H1 (cell line): ENCODE measurements at regions of chr16 and their contacts with region 1.

Region 1: GRCh38 chr16:53356478-53357200 is 77.6 kb upstream of the RBL2 start:
- DNase-seq: no peak
- H3K4me3 ChIP-seq: no peak overlapping the region
- H3K27ac ChIP-seq: no peak overlapping the region
- H3K4me1 ChIP-seq: 0 out of 7 replicates have a peak, but pooled peaks cover 0 to 2% (median 0%) of the 10 kb centered on the region in 4 experiments
- H3K27me3 ChIP-seq: no peaks in the 10 kb centered on the region
- CTCF ChIP-seq: peak; percentile 31 to 53 (median 32); a peak in 3 of 4 replicates
- EP300 ChIP-seq: no peak
- POLR2A ChIP-seq: no peak
- RAD21 ChIP-seq: peak; percentile 57 to 59

Region 2: DNA sequence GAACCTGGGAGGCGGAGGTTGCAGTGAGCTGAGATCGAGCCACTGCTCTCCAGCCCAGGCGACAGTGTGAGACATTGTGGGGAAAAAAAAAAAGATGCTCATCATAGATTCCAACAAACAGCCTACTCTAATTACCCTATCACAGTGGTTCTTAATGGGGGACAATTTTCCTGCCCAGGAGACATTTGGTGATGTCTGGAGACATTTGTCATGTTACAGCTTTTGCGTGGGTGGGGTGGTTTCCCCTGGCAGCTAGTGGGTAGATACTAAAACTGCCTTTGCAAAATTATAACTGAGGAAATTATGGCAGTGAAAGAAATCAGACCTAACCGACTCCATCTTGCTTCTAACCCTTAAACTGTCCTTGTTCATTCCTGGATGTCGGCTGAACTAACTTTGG is 14.8 kb before region 1 on chr16:
- CTCF ChIA-PET with region 1: interaction called, 14 read pairs
- POLR2A ChIA-PET with region 1: no interaction called
- DNase-seq: no peak
- H3K4me3 ChIP-seq: no peak overlapping the region
- H3K27ac ChIP-seq: no peak overlapping the region
- H3K4me1 ChIP-seq: no peaks in the 10 kb centered on the region
- H3K27me3 ChIP-seq: no peaks in the 10 kb centered on the region
- CTCF ChIP-seq: no peak
- EP300 ChIP-seq: no peak
- POLR2A ChIP-seq: no peak
- RAD21 ChIP-seq: no peak

Region 3: DNA sequence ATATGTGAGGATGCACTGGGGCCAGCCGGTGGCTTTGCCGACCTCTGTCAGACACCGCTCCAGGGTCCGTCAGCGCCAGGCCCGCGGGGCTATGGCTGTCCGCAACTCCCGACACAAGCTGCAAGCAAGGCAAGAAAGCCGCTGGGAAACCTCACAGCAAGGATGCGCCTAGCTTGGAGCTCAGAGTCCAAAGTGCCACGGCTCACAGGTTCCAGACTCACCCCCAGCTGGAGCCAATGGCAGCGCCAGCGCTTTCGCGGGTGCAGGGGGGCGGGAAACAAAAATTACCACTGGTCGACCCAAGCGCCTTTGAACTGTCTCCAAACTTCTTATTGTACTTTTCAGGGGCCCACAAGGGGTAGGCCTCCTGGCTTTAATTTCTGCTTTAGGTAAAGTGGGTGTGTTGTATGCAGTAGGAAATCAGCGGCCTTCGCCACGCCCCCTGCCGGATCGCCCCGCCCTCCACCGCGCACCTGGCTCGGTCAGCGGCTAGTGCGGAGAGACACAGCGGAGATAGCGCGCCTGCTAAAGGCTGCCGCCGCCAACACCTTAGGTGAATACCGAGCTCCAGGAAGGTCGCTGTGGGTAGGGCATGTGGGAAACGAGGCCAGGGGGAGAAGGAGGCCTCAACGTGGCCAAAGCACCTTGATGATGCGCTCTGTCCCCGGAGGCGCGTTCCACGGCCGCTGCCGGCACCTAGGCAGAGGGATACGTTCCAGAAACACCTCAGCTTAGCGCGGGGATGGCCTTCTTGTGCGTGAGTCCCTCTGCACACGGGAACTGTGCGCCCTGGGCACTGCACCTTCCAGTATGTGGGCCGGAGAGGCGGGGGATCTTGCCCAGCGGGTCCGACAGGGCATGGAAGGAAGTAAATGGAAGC is 16.6 kb after region 1 on chr16:
- CTCF ChIA-PET with region 1: interaction called, 10 read pairs
- POLR2A ChIA-PET with region 1: no interaction called
- DNase-seq: peak; percentile 38 to 87
- H3K4me3 ChIP-seq: peak overlapping the region in 1 of 4 experiments; percentile 22; a peak in 1 of 8 replicates
- H3K27ac ChIP-seq: no peak overlapping the region
- H3K4me1 ChIP-seq: 0 out of 7 replicates have a peak, but pooled peaks cover 0 to 2% (median 0%) of the 10 kb centered on the region in 4 experiments
- H3K27me3 ChIP-seq: no peaks in the 10 kb centered on the region
- CTCF ChIP-seq: no peak
- EP300 ChIP-seq: no peak
- POLR2A ChIP-seq: no peak
- RAD21 ChIP-seq: no peak